Spleen (tissue), 13 donors: ENCODE measurements at regions of chr5 and their contacts with region 1.

Region 1: GRCh38 chr5:177500685-177501522 is 3.5 kb upstream of the PDLIM7 start:
- DNase-seq: peak; percentile 97
- H3K4me3 ChIP-seq: no peak overlapping the region
- H3K27ac ChIP-seq: peak overlapping the region in 3 of 8 donors; percentile 38 to 60 (median 52)
- H3K4me1 ChIP-seq: peaks cover 30 to 98% (median 63%) of the 10 kb centered on the region in 6 donors
- H3K27me3 ChIP-seq: peaks cover 0 to 13% (median 0%) of the 10 kb centered on the region in 7 donors
- CTCF ChIP-seq: peak; percentile 73 to 97 (median 95)
- POLR2A ChIP-seq: no peak

Region 2: DNA sequence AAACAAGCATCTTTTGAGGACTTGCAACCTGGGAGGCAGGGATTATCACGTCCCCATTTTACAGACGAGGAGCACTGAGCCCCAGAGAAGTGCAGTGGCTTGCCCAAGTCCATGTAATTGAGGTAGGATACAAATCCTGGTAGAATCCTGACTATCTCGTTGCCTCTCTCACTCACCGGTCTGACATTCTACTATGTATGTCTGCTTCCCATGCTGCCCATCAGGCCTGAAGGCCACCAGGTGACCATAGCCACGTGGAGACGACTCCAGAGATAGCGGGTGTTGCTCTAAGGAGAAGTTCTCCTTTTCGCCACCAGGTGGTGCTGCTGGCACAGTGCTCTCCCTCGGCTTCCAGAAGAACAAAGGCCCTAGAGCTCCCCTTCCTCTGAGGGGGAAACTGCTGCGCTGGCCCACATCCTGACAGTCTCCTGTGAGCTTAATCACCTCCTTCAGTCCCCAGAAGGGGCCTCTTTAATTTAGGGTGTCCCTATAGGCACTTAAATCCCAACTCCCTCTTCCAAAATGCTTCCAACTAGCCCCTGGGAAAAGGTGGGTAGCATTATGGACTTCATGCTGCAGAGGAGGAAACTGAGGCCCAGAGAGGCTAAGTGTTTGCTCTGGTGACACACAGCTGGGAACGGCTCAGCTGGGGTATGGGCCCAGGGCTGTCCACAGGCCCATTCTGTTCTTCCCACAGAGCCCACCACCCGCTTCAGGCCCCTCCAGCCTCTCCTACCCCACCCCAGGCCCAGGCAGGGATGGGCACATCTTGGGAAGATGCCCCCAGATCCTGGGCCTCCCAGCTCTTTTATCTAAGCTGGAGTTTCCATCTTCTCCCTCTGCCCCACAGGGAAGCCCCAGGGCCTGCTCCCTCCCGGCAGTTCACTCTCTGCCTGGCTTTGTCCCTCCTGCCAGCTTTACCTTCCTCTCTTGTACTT is 110.3 kb before region 1 on chr5:
- intact Hi-C with region 1: loop called (anchors 5 kb)
- DNase-seq: peak; percentile 93
- H3K4me3 ChIP-seq: peak overlapping the region in 1 of 8 donors; percentile 18
- H3K27ac ChIP-seq: peak overlapping the region in 6 of 8 donors; percentile 3 to 86 (median 68)
- H3K4me1 ChIP-seq: peaks cover 17 to 59% (median 38%) of the 10 kb centered on the region in 6 donors
- H3K27me3 ChIP-seq: peaks cover 0 to 16% (median 0%) of the 10 kb centered on the region in 7 donors
- CTCF ChIP-seq: peak; percentile 93 to 99 (median 98)
- POLR2A ChIP-seq: no peak